Calu3 (cell line): ENCODE measurements at regions of chr18 and their contacts with region 1.

Region 1: GRCh38 chr18:43081396-43081795 is 34.1 kb downstream of the RIT2 start:
- DNase-seq: no peak
- H3K4me3 Mint-ChIP-seq: no peak overlapping the region
- H3K27ac Mint-ChIP-seq: no peak overlapping the region
- H3K4me1 Mint-ChIP-seq: no peaks in the 10 kb centered on the region
- H3K27me3 Mint-ChIP-seq: no peaks in the 10 kb centered on the region
- CTCF ChIP-seq: no peak

Region 2: GRCh38 chr18:43022873-43023272 is 58.5 kb before region 1 on chr18:
- CTCF ChIA-PET with region 1: no interaction called
- intact Hi-C with region 1: loop called (anchors 10 kb)
- DNase-seq: no peak
- H3K4me3 Mint-ChIP-seq: no peak overlapping the region
- H3K27ac Mint-ChIP-seq: no peak overlapping the region
- H3K4me1 Mint-ChIP-seq: no peaks in the 10 kb centered on the region
- H3K27me3 Mint-ChIP-seq: no peaks in the 10 kb centered on the region
- CTCF ChIP-seq: no peak

Region 3: DNA sequence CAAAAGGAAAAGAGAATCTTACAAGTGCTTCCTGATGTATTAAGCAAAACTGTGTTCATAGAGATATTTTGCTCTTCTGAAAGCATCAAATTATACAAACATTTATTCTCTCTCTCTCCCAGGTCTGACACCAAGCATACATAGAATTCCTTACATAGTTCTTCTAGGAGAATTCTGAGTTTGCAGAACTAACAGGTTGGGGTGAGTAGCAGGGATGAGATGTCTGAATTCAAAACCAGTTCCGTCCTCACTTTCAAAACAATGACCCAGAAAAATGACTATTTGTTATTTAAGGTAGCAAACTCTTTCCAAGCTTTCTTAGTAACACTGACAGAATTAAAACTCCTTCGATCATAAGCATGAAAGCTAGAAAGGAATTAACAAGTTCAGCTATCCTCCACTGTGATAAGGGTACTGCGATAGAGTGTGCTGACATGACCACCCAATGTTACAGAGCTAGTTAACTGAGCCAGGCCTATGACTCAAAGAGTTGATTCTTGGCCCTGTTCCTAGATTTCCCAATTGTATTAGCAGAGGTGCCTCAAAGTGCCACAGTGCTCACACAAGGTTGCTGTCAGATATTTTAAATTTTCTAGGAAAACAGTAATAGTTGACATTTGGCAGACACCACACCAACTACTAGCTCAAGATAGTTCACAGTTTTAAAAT is 1513.5 kb after region 1 on chr18:
- CTCF ChIA-PET with region 1: no interaction called
- intact Hi-C with region 1: no loop called
- DNase-seq: no peak
- H3K4me3 Mint-ChIP-seq: no peak overlapping the region
- H3K27ac Mint-ChIP-seq: no peak overlapping the region
- H3K4me1 Mint-ChIP-seq: peaks cover 9% of the 10 kb centered on the region
- H3K27me3 Mint-ChIP-seq: no peaks in the 10 kb centered on the region
- CTCF ChIP-seq: no peak